ENCODE measurements at regions of chr7 and their contacts with region 1.

Region 1: GRCh38 chr7:124856299-124856888 is 73.2 kb downstream of the POT1 start:
- DNase-seq: peak in 1 of 2 experiments; percentile 21
- H3K4me3 ChIP-seq: no peak overlapping the region
- H3K4me3 Mint-ChIP-seq: no peak overlapping the region
- H3K27ac Mint-ChIP-seq: no peak overlapping the region
- H3K4me1 ChIP-seq: no peaks in the 10 kb centered on the region; the same call in 1 of the 2 replicates
- H3K4me1 Mint-ChIP-seq: no peaks in the 10 kb centered on the region
- H3K27me3 ChIP-seq: no peaks in the 10 kb centered on the region
- H3K27me3 Mint-ChIP-seq: no peaks in the 10 kb centered on the region
- CTCF ChIP-seq: peak; percentile 50 to 56

Region 2: GRCh38 chr7:124784879-124785818 is 71.2 kb before region 1 on chr7:
- CTCF ChIA-PET with region 1: no interaction called
- POLR2A ChIA-PET with region 1: no interaction called
- intact Hi-C with region 1: loop called (anchors 2 kb)
- DNase-seq: peak; percentile 50 to 56
- H3K4me3 ChIP-seq: no peak overlapping the region
- H3K4me3 Mint-ChIP-seq: no peak overlapping the region
- H3K27ac Mint-ChIP-seq: no peak overlapping the region
- H3K4me1 ChIP-seq: no peaks in the 10 kb centered on the region
- H3K4me1 Mint-ChIP-seq: no peaks in the 10 kb centered on the region
- H3K27me3 ChIP-seq: no peaks in the 10 kb centered on the region
- H3K27me3 Mint-ChIP-seq: peaks cover 10% of the 10 kb centered on the region
- CTCF ChIP-seq: peak; percentile 74 to 87

Region 3: GRCh38 chr7:124996778-124997177 is 140.4 kb after region 1 on chr7:
- CTCF ChIA-PET with region 1: no interaction called
- POLR2A ChIA-PET with region 1: interaction called, 5 read pairs
- intact Hi-C with region 1: loop called (anchors 1 kb)
- DNase-seq: peak in 1 of 2 experiments; percentile 17
- H3K4me3 ChIP-seq: no peak overlapping the region
- H3K4me3 Mint-ChIP-seq: no peak overlapping the region
- H3K27ac Mint-ChIP-seq: no peak overlapping the region
- H3K4me1 ChIP-seq: peaks cover 31% of the 10 kb centered on the region
- H3K4me1 Mint-ChIP-seq: peaks cover 20% of the 10 kb centered on the region
- H3K27me3 ChIP-seq: no peaks in the 10 kb centered on the region
- H3K27me3 Mint-ChIP-seq: no peaks in the 10 kb centered on the region
- CTCF ChIP-seq: peak in 1 of 2 experiments; percentile 30